ENCODE measurements at regions of chr11 and their contacts with region 1.

Region 1: DNA sequence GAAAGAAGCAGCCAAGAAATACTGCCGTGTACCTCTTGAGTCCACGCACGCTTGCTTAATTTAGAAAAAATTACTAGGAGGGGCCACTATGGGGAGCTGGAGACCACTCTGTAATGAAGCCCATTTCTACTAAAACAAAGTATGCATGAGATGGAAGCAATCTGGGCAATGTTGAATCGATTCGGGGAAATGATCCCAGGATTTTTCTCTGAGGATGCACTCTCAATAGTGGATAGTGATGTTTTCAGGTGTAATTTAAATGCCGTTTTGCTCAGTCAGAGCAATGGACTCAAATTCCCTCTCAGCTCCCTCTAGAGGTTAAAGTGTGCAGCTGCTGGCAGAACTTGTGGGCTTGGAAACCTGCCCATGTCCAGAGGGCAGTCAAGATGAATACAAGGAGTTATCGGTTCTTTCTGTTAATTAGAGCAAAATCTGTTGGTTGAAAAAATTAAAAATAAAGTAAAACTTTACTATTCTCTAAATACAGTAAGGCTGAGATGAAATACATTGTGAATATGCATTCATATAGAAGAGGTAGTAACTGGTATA is 64.1 kb downstream of the ME3 start:
- DNase-seq: peak; percentile 40 to 71
- ATAC-seq: peak; percentile 95 to 98
- H3K4me3 ChIP-seq: peak overlapping the region; percentile 0 to 37 (median 18)
- H3K27ac ChIP-seq: peak overlapping the region in 2 of 4 donors; percentile 1 to 31
- H3K4me1 ChIP-seq: peaks cover 14 to 20% of the 10 kb centered on the region in 2 donors
- H3K27me3 ChIP-seq: no peaks in the 10 kb centered on the region
- CTCF ChIP-seq: peak; percentile 76 to 93 (median 84)
- POLR2A ChIP-seq: no peak

Region 2: DNA sequence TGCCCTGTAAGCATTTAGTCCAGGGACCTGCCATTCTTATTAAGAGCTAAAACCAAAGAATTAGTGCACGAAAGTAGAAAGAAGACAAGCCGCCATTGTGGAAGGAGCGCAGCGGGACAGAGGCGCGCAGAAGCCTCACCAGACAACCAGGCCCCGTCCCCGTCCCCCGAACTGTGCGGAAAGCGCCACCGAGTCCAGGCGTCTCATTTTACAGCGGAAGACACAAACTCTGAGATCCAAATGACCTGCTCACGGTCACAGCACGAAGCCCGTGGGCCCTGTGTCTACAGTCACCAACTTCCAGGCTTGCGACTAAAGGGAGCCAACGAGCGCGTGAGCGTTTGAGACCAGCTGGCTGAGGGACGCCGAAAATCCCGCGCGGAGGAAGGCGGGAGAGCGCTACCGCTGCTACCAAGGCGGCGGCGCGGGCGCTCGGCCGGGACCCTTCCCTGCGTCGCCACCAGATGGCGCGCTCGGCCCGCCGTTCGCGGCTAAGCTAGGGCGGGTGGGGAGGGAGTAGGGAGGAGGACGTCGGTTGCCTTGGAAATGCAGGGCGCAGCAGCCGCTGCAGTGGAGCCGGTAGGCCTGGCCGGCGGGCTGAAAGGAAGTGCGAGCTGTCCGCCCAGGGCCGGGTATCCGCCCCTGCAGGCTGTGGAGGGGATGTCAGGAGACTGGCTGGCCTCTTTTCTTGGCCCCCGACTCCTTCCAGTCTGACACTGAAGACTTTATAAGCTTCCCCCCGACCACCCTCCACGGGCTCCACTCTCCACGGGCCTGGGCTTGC is 753.6 kb before region 1 on chr11:
- in situ Hi-C with region 1: no loop called
- intact Hi-C with region 1: loop called (anchors 10 kb)
- DNase-seq: peak; percentile 68 to 85
- ATAC-seq: peak; percentile 94 to 96
- H3K4me3 ChIP-seq: peak overlapping the region; percentile 54 to 71 (median 61)
- H3K27ac ChIP-seq: peak overlapping the region; percentile 78 to 91 (median 80)
- H3K4me1 ChIP-seq: peaks cover 4 to 5% of the 10 kb centered on the region in 2 donors
- H3K27me3 ChIP-seq: no peaks in the 10 kb centered on the region
- CTCF ChIP-seq: peak; percentile 84 to 99 (median 93)
- POLR2A ChIP-seq: peak in 1 of 2 donors; percentile 35

Region 3: GRCh38 chr11:86456052-86456939 is 152.0 kb before region 1 on chr11:
- in situ Hi-C with region 1: loop called in 3 of 4 experiments (anchors 5 to 10 kb)
- intact Hi-C with region 1: loop called (anchors 2 kb)
- DNase-seq: peak; percentile 64 to 78
- ATAC-seq: peak; percentile 81 to 90
- H3K4me3 ChIP-seq: no peak overlapping the region
- H3K27ac ChIP-seq: peak overlapping the region in 1 of 4 donors; percentile 26
- H3K4me1 ChIP-seq: peaks cover 9 to 15% of the 10 kb centered on the region in 2 donors
- H3K27me3 ChIP-seq: no peaks in the 10 kb centered on the region
- CTCF ChIP-seq: peak; percentile 81 to 91 (median 85)
- POLR2A ChIP-seq: no peak

Region 4: GRCh38 chr11:86559311-86559945 is 48.9 kb before region 1 on chr11:
- in situ Hi-C with region 1: no loop called
- intact Hi-C with region 1: no loop called
- DNase-seq: no peak
- ATAC-seq: peak; percentile 53 to 55
- H3K4me3 ChIP-seq: no peak overlapping the region
- H3K27ac ChIP-seq: peak overlapping the region; percentile 65 to 77 (median 68)
- H3K4me1 ChIP-seq: peaks cover 10 to 14% of the 10 kb centered on the region in 2 donors
- H3K27me3 ChIP-seq: no peaks in the 10 kb centered on the region
- CTCF ChIP-seq: no peak
- POLR2A ChIP-seq: no peak

Region 5: DNA sequence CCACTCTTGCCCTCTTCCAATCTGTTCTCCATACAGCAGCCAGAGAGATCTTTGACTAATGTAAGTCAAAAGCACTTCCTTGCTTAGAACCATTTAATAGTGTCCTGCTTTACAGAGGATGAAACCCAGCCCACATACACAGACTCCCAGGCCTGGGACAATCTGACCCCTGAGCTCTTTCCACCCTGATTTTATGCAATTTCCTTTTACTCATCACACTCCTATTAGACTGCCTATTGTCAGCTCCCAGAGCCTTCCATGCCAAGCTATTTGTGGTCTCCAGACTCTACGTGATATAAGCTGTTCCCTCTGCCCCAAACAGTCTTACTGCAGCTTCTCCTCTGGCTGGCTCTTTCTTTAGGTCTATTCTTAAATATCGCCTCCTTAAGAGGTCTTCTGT is 36.0 kb after region 1 on chr11:
- in situ Hi-C with region 1: no loop called
- intact Hi-C with region 1: no loop called
- DNase-seq: no peak
- ATAC-seq: no peak
- H3K4me3 ChIP-seq: no peak overlapping the region
- H3K27ac ChIP-seq: no peak overlapping the region
- H3K4me1 ChIP-seq: no peaks in the 10 kb centered on the region
- H3K27me3 ChIP-seq: no peaks in the 10 kb centered on the region
- CTCF ChIP-seq: no peak
- POLR2A ChIP-seq: no peak

Region 6: DNA sequence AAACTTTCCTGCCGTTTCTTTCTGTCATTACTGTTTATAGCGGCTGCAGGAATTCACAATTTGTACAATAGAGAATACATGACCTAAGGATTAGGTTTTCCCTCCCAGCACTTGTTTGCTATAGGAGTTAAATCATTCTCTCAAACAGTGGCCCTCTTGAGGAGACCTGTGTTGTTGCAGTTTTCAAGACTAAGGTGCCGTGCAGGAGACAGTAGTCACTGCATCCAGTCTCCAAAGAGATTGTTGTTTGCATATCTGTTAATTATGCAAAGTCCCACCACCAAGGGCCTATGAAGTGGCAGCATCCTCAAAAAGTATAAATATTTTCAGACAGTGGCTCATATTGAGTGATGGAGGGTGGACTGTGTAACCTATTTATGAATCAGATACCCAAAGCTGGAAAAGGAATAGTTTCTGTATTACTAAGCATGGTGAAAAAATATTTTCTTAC is 194.3 kb after region 1 on chr11:
- in situ Hi-C with region 1: loop called in 1 of 4 experiments (anchors 10 kb)
- intact Hi-C with region 1: loop called (anchors 2 kb)
- DNase-seq: no peak
- ATAC-seq: peak in 1 of 2 donors; percentile 37
- H3K4me3 ChIP-seq: no peak overlapping the region
- H3K27ac ChIP-seq: peak overlapping the region in 1 of 4 donors; percentile 9
- H3K4me1 ChIP-seq: peaks cover 5 to 39% of the 10 kb centered on the region in 2 donors
- H3K27me3 ChIP-seq: no peaks in the 10 kb centered on the region
- CTCF ChIP-seq: peak in 4 of 5 experiments; percentile 46 to 51 (median 48)
- POLR2A ChIP-seq: no peak